ENCODE measurements at regions of chr2 and their contacts with region 1.

Region 1: DNA sequence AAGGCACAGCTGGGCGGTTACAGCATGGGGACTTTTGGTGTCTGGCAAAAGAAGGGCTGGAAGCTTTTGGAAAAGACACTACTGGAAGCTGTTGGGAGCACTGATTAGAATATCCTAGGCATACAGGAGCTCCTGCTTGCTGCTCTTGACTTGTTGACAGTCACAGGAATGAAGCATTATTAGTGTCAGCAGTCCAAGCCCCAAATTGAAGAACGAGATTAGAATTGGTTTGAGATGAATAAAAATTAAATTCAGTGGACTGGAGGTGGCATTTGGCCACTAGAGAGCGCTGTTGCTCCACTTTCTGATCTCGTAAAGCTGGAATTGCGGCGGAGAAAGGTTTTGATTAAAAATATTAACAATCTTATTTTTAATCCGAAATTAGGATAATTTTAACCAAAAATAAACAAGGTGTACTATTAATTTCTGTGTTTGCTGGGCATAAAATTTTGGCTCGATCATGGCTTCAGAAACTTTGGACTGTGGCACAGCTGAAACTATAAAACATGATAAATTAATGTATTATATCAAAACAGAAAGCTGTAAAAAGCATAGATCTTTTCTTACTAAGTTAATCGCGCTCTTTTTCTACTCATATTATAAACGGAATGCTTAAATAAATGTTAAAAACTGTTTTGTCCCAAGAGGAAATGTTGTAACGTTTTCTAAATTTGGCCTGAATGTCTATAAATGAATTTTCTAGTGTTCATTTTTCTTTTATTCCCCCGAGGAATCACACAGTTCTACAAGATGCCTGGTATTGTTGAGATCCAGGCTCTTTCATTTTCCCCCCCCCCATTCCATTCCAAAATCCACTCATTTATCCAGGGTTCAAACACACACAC is 2.4 kb upstream of the HOXD8 start:
- DNase-seq: peak; percentile 75
- H3K4me3 Mint-ChIP-seq: no peak overlapping the region
- H3K27ac Mint-ChIP-seq: peak overlapping the region; percentile 82
- H3K4me1 Mint-ChIP-seq: peaks cover 25% of the 10 kb centered on the region
- H3K27me3 Mint-ChIP-seq: peaks cover 95% of the 10 kb centered on the region

Region 2: GRCh38 chr2:176056406-176056805 is 70.7 kb before region 1 on chr2:
- CTCF ChIA-PET with region 1: no interaction called
- DNase-seq: no peak
- H3K4me3 Mint-ChIP-seq: no peak overlapping the region
- H3K27ac Mint-ChIP-seq: no peak overlapping the region
- H3K4me1 Mint-ChIP-seq: no peaks in the 10 kb centered on the region
- H3K27me3 Mint-ChIP-seq: peaks cover 13% of the 10 kb centered on the region

Region 3: GRCh38 chr2:176110975-176111663 is 16.0 kb before region 1 on chr2:
- CTCF ChIA-PET with region 1: interaction called, 12 read pairs
- DNase-seq: no peak
- H3K4me3 Mint-ChIP-seq: no peak overlapping the region
- H3K27ac Mint-ChIP-seq: peak overlapping the region; percentile 78
- H3K4me1 Mint-ChIP-seq: peaks cover 6% of the 10 kb centered on the region
- H3K27me3 Mint-ChIP-seq: peaks cover 92% of the 10 kb centered on the region

Region 4: GRCh38 chr2:176454893-176455811 is 328.0 kb after region 1 on chr2:
- CTCF ChIA-PET with region 1: interaction called, 20 read pairs
- DNase-seq: peak; percentile 87
- H3K4me3 Mint-ChIP-seq: no peak overlapping the region
- H3K27ac Mint-ChIP-seq: no peak overlapping the region
- H3K4me1 Mint-ChIP-seq: no peaks in the 10 kb centered on the region
- H3K27me3 Mint-ChIP-seq: peaks cover 40% of the 10 kb centered on the region

Region 5: GRCh38 chr2:176554101-176555048 is 427.2 kb after region 1 on chr2:
- CTCF ChIA-PET with region 1: interaction called, 17 read pairs
- DNase-seq: peak; percentile 25
- H3K4me3 Mint-ChIP-seq: peak overlapping the region; percentile 66
- H3K27ac Mint-ChIP-seq: no peak overlapping the region
- H3K4me1 Mint-ChIP-seq: peaks cover 12% of the 10 kb centered on the region
- H3K27me3 Mint-ChIP-seq: peaks cover 47% of the 10 kb centered on the region

Region 6: DNA sequence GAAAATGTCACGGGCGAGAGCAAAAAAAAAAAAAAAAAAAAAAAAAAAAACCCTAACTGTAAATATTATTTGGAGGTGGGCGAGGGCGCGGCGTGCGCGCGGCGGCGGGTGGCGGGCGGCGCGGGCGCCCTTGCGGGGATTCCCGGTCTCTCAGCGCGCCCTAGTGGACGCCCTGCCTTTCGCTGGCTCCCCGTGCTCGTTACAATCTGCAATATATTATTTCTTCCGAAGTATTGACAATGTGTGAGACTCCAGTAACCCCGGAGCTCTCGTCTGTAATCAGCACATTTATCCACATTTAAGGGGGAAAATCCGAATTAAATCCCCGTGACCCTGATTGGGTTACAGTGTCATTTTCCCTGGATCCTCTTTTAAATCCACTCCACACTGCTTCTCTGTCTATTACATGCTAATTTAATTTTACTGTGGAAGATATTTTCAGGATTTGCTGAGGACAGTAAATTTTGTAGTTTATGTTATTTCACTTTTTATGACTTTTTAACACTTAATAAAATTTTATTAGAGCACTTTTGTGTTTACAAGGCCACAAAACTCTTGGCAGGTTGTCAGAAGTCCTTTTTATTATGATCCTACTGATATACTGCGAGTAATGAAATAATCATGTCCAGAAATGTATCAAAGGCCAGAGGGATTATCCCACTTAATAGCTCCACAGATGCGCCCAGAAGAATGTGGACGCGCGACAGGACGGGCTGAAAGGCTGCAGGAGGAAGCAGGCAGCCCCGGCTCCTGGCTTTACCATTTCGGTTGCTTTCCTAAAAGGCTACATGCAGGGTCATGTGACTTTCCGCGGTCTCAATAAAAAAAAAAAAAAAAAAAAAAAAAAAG is 511.2 kb after region 1 on chr2:
- CTCF ChIA-PET with region 1: interaction called, 11 read pairs
- DNase-seq: peak; percentile 68
- H3K4me3 Mint-ChIP-seq: peak overlapping the region; percentile 33
- H3K27ac Mint-ChIP-seq: no peak overlapping the region
- H3K4me1 Mint-ChIP-seq: no peaks in the 10 kb centered on the region
- H3K27me3 Mint-ChIP-seq: peaks cover 60% of the 10 kb centered on the region

Measured in activated naive CD4-positive, alpha-beta T cell treated with anti-CD3 and anti-CD28 coated beads, Interleukin-2, amount 10 ng/mL, durations not matched to agents 7 days and 5 days (primary cell).